Activated naive CD4-positive, alpha-beta T cell treated with anti-CD3 and anti-CD28 coated beads, Interleukin-2, amount 10 ng/mL, durations not matched to agents 7 days and 5 days (primary cell): ENCODE measurements at regions of chr1 and their contacts with region 1.

Region 1: DNA sequence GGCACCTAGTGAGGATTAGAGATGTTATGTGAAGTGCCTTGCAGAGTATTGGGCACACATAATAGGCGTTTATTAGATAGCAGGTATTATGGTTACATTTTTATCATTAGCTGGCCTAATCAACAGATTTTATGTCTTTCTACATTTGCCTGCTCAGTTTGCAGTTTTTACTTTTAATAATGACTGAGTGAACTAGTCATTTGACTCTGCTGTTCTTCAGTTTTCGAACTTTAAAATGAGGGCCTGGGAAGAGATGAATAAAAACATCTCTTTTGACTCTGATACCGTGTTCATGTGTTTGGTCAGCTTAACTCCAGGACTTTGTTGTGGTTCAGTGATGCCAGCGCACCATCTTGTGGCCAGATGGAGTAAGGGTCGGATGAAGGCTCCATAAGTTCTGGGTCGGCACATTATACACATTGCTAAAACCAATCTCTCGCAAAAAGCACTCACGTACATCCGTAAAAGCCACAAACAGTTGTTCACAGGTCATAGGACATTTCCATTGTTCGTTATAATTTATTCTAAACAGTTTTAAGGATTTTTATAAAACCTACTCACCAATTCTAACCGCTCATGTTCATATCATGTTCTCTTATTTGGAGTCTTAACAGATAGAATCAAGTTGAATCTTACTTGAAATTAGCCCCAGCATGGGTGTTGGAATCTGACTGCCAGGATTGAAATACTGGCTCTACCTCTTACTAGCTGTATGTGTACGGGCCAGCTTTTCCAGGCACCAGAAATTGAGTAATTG is 78.4 kb upstream of the GPR88 start:
- DNase-seq: peak; percentile 80
- H3K4me3 Mint-ChIP-seq: no peak overlapping the region
- H3K27ac Mint-ChIP-seq: peak overlapping the region; percentile 64
- H3K4me1 Mint-ChIP-seq: peaks cover 44% of the 10 kb centered on the region
- H3K27me3 Mint-ChIP-seq: no peaks in the 10 kb centered on the region

Region 2: DNA sequence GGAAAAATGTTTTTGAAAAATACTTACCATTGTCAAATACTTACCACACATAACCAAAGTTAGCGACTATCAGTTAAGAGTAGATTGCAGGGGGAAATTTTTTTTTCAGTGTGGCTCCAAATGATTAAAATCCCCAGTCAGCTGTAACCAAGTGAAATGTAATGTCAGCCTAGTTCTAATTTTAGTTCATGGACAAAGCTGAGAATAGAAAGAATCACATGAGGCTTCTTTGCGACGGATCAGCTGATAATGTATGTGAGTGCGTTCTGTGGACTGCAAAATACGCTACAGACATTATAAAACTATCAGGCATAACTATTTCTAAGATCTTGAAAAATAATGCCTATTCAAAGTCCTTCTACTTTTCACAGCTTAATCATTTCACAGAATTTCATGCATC is 281.4 kb before region 1 on chr1 and contains the start of gene LRRC39:
- CTCF ChIA-PET with region 1: no interaction called
- DNase-seq: no peak
- H3K4me3 Mint-ChIP-seq: no peak within 1 kb of the TSS
- H3K27ac Mint-ChIP-seq: no peak within 1 kb of the TSS
- H3K4me1 Mint-ChIP-seq: no peaks in the 10 kb centered on the region
- H3K27me3 Mint-ChIP-seq: no peaks in the 10 kb centered on the region

Region 3: GRCh38 chr1:100328133-100328532 is 131.4 kb before region 1 on chr1:
- CTCF ChIA-PET with region 1: no interaction called
- DNase-seq: no peak
- H3K4me3 Mint-ChIP-seq: no peak overlapping the region
- H3K27ac Mint-ChIP-seq: no peak overlapping the region
- H3K4me1 Mint-ChIP-seq: peaks cover under 1% of the 10 kb centered on the region
- H3K27me3 Mint-ChIP-seq: peaks cover 8% of the 10 kb centered on the region

Region 4: GRCh38 chr1:100351095-100351891 is 108.2 kb before region 1 on chr1:
- CTCF ChIA-PET with region 1: interaction called, 25 read pairs
- DNase-seq: peak; percentile 92
- H3K4me3 Mint-ChIP-seq: peak overlapping the region; percentile 92
- H3K27ac Mint-ChIP-seq: peak overlapping the region; percentile 98
- H3K4me1 Mint-ChIP-seq: peaks cover 32% of the 10 kb centered on the region
- H3K27me3 Mint-ChIP-seq: peaks cover 3% of the 10 kb centered on the region

Region 5: DNA sequence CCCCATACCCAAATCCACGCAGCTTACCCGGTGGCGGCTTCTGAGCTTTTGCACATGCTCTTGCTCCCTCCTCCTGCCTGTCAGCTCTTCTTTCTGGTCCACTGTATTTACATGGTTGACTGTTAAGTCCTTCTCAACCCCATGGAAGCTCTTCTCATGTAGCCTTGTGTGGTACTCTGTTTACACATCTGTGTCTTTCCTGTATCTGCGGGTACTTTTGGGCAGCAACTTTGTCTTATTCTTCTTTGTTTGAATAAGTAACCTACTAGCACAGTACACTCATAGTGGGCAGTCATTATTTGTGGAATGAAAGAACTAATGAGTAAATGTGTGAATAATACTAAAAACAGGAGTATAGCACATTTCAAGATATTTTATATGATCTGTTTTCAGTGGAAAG is 10.1 kb before region 1 on chr1:
- CTCF ChIA-PET with region 1: interaction called, 22 read pairs
- DNase-seq: no peak
- H3K4me3 Mint-ChIP-seq: no peak overlapping the region
- H3K27ac Mint-ChIP-seq: peak overlapping the region; percentile 69
- H3K4me1 Mint-ChIP-seq: peaks cover 96% of the 10 kb centered on the region
- H3K27me3 Mint-ChIP-seq: no peaks in the 10 kb centered on the region

Region 6: DNA sequence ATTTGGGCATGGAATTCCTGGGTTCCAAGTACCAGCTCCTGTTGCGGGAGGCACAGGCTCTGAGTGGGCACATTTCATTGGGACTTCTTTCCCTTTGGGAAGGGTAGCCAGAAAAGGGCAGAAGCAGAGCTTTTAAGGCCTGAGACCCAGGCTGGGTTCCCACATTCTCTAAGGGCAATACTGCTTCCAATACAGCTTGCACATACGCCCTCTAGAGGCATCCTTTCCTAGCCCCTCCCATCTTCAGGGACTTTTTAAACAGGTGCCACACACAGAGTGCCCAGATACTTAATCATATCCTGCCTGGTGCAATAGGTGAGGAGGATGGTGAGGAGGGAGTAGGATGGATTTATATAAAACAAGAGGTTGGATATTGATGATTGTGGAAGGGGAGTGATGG is 84.1 kb after region 1 on chr1:
- CTCF ChIA-PET with region 1: interaction called, 11 read pairs
- DNase-seq: peak; percentile 58
- H3K4me3 Mint-ChIP-seq: no peak overlapping the region
- H3K27ac Mint-ChIP-seq: no peak overlapping the region
- H3K4me1 Mint-ChIP-seq: peaks cover 11% of the 10 kb centered on the region
- H3K27me3 Mint-ChIP-seq: peaks cover 39% of the 10 kb centered on the region

Region 7: GRCh38 chr1:100866041-100866900 is 406.7 kb after region 1 on chr1:
- CTCF ChIA-PET with region 1: interaction called, 40 read pairs
- DNase-seq: no peak
- H3K4me3 Mint-ChIP-seq: no peak overlapping the region
- H3K27ac Mint-ChIP-seq: no peak overlapping the region
- H3K4me1 Mint-ChIP-seq: no peaks in the 10 kb centered on the region
- H3K27me3 Mint-ChIP-seq: no peaks in the 10 kb centered on the region